Activated CD4-positive, alpha-beta T cell treated with anti-CD3 and anti-CD28 coated beads for 36 hours (primary cell): ENCODE measurements at regions of chr2 and their contacts with region 1.

Region 1: GRCh38 chr2:181715033-181715630 is 34.8 kb upstream of the NEUROD1 start:
- DNase-seq: peak; percentile 84
- ATAC-seq: peak; percentile 71
- H3K4me3 Mint-ChIP-seq: no peak overlapping the region
- H3K27ac Mint-ChIP-seq: no peak overlapping the region
- H3K4me1 Mint-ChIP-seq: no peaks in the 10 kb centered on the region
- H3K27me3 Mint-ChIP-seq: no peaks in the 10 kb centered on the region

Region 2: DNA sequence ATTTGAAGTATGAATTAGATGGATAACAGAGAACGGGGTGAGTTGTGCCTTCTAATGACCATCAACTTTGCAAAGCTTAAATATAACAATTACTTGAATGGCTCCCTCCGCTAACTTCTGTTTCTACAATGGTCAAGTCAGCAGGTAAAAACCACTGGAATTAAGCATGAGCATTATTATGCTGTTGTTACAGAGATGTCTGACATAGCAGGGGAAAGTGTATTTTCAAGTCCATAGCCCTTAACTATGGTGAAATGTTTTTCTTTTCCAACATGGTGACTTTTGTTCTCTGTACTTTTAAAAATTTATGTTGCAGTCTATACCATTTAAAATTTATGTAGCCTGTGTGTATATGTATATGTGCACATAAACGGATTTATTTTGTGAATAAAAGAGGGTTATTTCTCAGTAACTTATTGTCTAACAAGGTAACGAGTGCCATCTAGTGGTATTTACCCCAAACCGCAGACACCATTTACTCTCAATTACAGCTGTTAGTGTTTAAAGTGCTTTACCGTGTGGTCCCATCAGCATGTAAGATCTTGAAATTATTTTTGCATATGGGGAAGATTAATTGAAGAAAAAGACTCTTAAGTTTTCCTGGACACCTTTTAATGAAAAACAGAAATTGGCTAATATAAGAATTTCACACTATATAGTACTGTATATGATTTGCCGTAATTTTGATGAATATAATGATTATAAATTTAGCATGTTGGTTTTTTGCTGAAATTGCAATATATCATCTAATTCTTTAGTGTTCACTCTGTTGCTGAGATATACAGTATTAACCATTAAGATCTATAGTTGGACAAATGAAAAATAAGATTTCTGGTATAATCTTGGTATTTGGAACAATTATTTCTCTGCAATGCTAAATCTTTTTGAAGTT is 656.5 kb before region 1 on chr2:
- CTCF ChIA-PET with region 1: interaction called, 12 read pairs
- POLR2A ChIA-PET with region 1: no interaction called
- intact Hi-C with region 1: no loop called
- DNase-seq: peak; percentile 50
- ATAC-seq: peak; percentile 69
- H3K4me3 Mint-ChIP-seq: no peak overlapping the region
- H3K27ac Mint-ChIP-seq: no peak overlapping the region
- H3K4me1 Mint-ChIP-seq: peaks cover 6% of the 10 kb centered on the region
- H3K27me3 Mint-ChIP-seq: no peaks in the 10 kb centered on the region

Region 3: GRCh38 chr2:181305301-181306123 is 409.6 kb before region 1 on chr2:
- CTCF ChIA-PET with region 1: no interaction called
- POLR2A ChIA-PET with region 1: no interaction called
- intact Hi-C with region 1: loop called in 1 of 2 experiments (anchors 10 kb)
- DNase-seq: peak; percentile 63
- ATAC-seq: peak; percentile 84
- H3K4me3 Mint-ChIP-seq: peak overlapping the region; percentile 60
- H3K27ac Mint-ChIP-seq: peak overlapping the region; percentile 91
- H3K4me1 Mint-ChIP-seq: peaks cover 74% of the 10 kb centered on the region
- H3K27me3 Mint-ChIP-seq: no peaks in the 10 kb centered on the region

Region 4: GRCh38 chr2:181457121-181457740 is 257.9 kb before region 1 on chr2 and contains the start of gene ITGA4:
- CTCF ChIA-PET with region 1: interaction called, 12 read pairs
- POLR2A ChIA-PET with region 1: no interaction called
- intact Hi-C with region 1: loop called in 1 of 2 experiments (anchors 10 kb)
- DNase-seq: peak; percentile 93
- ATAC-seq: peak; percentile 86
- H3K4me3 Mint-ChIP-seq: peak within 1 kb of the TSS; percentile 91
- H3K27ac Mint-ChIP-seq: peak within 1 kb of the TSS; percentile 95
- H3K4me1 Mint-ChIP-seq: peaks cover 53% of the 10 kb centered on the region
- H3K27me3 Mint-ChIP-seq: no peaks in the 10 kb centered on the region
- total RNA-seq, gene ITGA4: 27.7 to 33.6 TPM

Region 5: DNA sequence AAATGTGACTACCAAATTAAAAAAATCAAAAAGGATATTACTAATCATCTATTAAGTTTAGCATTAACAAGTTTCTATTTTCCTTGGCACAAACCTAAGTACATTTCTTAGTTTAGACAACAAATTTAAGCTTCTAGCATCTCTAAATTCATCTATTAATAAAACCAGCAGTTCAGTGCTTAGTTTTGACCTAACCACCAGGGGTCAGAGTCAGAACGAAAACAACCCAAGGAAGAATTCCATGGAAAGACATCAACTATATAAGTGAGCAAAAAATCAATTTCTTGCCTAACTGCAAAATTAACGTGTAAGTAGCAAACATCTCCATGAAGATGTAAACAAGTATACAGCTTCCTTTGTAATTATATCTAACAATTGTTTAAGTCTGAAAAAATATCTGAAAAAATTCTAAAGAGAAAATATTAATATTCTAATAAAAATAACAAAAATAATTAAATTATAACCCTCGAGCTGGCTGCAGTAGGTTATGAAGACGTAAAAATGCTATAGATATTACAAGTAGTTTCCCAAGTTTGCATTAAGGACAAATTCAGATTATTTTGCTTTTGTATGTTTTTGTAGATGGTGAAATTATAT is 141.9 kb before region 1 on chr2:
- CTCF ChIA-PET with region 1: interaction called, 37 read pairs
- POLR2A ChIA-PET with region 1: no interaction called
- intact Hi-C with region 1: loop called (anchors 1 to 5 kb)
- DNase-seq: no peak
- ATAC-seq: no peak
- H3K4me3 Mint-ChIP-seq: no peak overlapping the region
- H3K27ac Mint-ChIP-seq: no peak overlapping the region
- H3K4me1 Mint-ChIP-seq: no peaks in the 10 kb centered on the region
- H3K27me3 Mint-ChIP-seq: no peaks in the 10 kb centered on the region

Region 6: DNA sequence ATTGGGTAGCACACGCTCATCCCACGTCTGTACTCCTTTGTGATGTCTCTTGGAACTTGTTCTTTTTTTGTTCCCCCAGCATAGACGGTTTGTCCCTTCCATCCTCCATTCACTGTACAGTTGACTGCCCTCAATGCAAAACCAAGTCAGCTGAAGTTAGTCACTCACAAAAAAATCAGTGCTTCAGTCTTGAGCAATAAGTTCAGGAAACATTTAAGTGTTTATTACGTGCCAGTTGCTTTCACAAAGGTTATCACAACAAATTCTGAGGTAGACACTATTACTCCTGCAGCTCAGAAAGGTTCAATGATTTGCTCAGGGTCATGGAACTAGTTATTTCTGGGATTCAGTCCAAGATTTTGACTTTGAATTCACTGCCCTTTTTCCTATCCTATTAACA is 609.5 kb after region 1 on chr2:
- CTCF ChIA-PET with region 1: no interaction called
- POLR2A ChIA-PET with region 1: no interaction called
- intact Hi-C with region 1: no loop called
- DNase-seq: no peak
- ATAC-seq: no peak
- H3K4me3 Mint-ChIP-seq: no peak overlapping the region
- H3K27ac Mint-ChIP-seq: no peak overlapping the region
- H3K4me1 Mint-ChIP-seq: no peaks in the 10 kb centered on the region
- H3K27me3 Mint-ChIP-seq: no peaks in the 10 kb centered on the region